ENCODE measurements at regions of chr16 and their contacts with region 1.

Region 1: DNA sequence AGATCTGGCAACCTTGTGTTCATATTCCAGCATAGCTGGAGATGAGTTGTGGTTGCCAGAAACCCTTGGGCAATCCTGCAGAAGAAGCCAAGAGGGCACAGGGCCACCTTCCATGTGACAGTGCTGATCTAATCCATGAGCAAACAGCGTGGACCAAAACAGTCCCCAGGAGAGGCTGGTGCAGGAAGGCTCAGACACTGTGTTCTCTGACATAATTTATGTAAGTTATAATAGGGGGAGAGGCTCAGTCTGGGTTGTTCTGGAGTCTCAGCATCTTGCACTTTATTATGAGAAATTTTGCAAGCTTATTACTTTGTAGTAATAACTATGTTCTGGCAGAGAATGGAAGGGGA is 273.9 kb downstream of the HAPSTR1 start:
- DNase-seq: peak in 2 of 4 donors; percentile 34
- ATAC-seq: peak; percentile 83
- H3K4me3 ChIP-seq: no peak overlapping the region
- H3K27ac ChIP-seq: no peak overlapping the region
- H3K4me1 ChIP-seq: no peaks in the 10 kb centered on the region
- H3K27me3 ChIP-seq: no peaks in the 10 kb centered on the region
- CTCF ChIP-seq: no peak

Region 2: GRCh38 chr16:9425236-9425635 is 59.9 kb after region 1 on chr16:
- intact Hi-C with region 1: loop called in 1 of 2 experiments (anchors 10 kb)
- DNase-seq: no peak
- ATAC-seq: no peak
- H3K4me3 ChIP-seq: no peak overlapping the region
- H3K27ac ChIP-seq: no peak overlapping the region
- H3K4me1 ChIP-seq: no peaks in the 10 kb centered on the region
- H3K27me3 ChIP-seq: no peaks in the 10 kb centered on the region
- CTCF ChIP-seq: no peak

Region 3: GRCh38 chr16:9499941-9500593 is 134.7 kb after region 1 on chr16:
- intact Hi-C with region 1: no loop called
- DNase-seq: no peak
- ATAC-seq: peak; percentile 83
- H3K4me3 ChIP-seq: no peak overlapping the region
- H3K27ac ChIP-seq: no peak overlapping the region
- H3K4me1 ChIP-seq: no peaks in the 10 kb centered on the region
- H3K27me3 ChIP-seq: no peaks in the 10 kb centered on the region
- CTCF ChIP-seq: no peak

Region 4: GRCh38 chr16:9556949-9557665 is 191.8 kb after region 1 on chr16:
- intact Hi-C with region 1: no loop called
- DNase-seq: no peak
- ATAC-seq: no peak
- H3K4me3 ChIP-seq: no peak overlapping the region
- H3K27ac ChIP-seq: no peak overlapping the region
- H3K4me1 ChIP-seq: no peaks in the 10 kb centered on the region
- H3K27me3 ChIP-seq: no peaks in the 10 kb centered on the region
- CTCF ChIP-seq: no peak